ENCODE measurements at regions of chr17 and their contacts with region 1.

Region 1: GRCh38 chr17:5391678-5392077 is 27.8 kb downstream of the NUP88 start:
- DNase-seq: no peak
- ATAC-seq: no peak
- H3K4me3 ChIP-seq: no peak overlapping the region
- H3K27ac ChIP-seq: no peak overlapping the region; the same call in 2 of the 3 replicates
- H3K4me1 ChIP-seq: no peaks in the 10 kb centered on the region
- H3K27me3 ChIP-seq: no peaks in the 10 kb centered on the region
- CTCF ChIP-seq: no peak
- EP300 ChIP-seq: no peak
- POLR2A ChIP-seq: no peak
- RAD21 ChIP-seq: no peak

Region 2: GRCh38 chr17:5381542-5381941 is 10.1 kb before region 1 on chr17:
- CTCF ChIA-PET with region 1: no interaction called
- POLR2A ChIA-PET with region 1: interaction called, 14 read pairs
- in situ Hi-C with region 1: no loop called
- intact Hi-C with region 1: no loop called
- DNase-seq: no peak
- ATAC-seq: no peak
- H3K4me3 ChIP-seq: no peak overlapping the region
- H3K27ac ChIP-seq: no peak overlapping the region; the same call in 2 of the 3 replicates
- H3K4me1 ChIP-seq: no peaks in the 10 kb centered on the region; a peak in 1 of 5 replicates
- H3K27me3 ChIP-seq: no peaks in the 10 kb centered on the region
- CTCF ChIP-seq: no peak
- EP300 ChIP-seq: no peak
- POLR2A ChIP-seq: peak; percentile 44; the same call in 1 of the 2 replicates
- RAD21 ChIP-seq: no peak

Measured in K562 (cell line).